ENCODE measurements at regions of chr9 and their contacts with region 1.

Region 1: GRCh38 chr9:32579706-32580331 is 6.9 kb upstream of the NDUFB6 start:
- DNase-seq: no peak
- ATAC-seq: peak; percentile 73
- H3K4me3 ChIP-seq: no peak overlapping the region
- H3K27ac ChIP-seq: no peak overlapping the region
- H3K4me1 ChIP-seq: peaks cover 4% of the 10 kb centered on the region; the same call in 1 of the 2 replicates
- H3K27me3 ChIP-seq: no peaks in the 10 kb centered on the region
- CTCF ChIP-seq: peak; percentile 85 to 93 (median 91)
- EP300 ChIP-seq: no peak
- POLR2A ChIP-seq: no peak
- RAD21 ChIP-seq: peak; percentile 83

Region 2: DNA sequence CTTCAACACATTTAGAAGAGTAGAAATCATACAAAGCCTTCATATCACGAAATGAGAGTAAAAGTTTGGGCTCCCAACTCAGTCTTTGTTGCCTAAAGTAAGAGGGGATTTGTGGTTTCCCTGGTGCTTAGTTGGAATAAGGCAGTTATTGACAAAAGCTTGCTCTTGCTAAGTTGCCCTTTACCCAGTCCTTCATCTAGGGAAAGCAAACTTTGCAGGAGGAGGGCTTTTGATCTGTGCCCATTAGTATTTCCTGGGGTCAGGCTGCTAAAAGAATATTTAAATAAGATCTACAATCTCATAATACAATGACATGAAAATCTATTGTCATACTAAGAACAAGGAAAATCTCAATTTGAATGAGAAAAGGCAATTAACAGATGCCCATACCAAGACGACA is 279.4 kb before region 1 on chr9:
- CTCF ChIA-PET with region 1: no interaction called
- POLR2A ChIA-PET with region 1: no interaction called
- RAD21 ChIA-PET with region 1: no interaction called
- SMC1A ChIA-PET with region 1: no interaction called
- in situ Hi-C with region 1: no loop called
- intact Hi-C with region 1: no loop called
- DNase-seq: no peak
- ATAC-seq: no peak
- H3K4me3 ChIP-seq: no peak overlapping the region
- H3K27ac ChIP-seq: no peak overlapping the region
- H3K4me1 ChIP-seq: no peaks in the 10 kb centered on the region
- H3K27me3 ChIP-seq: no peaks in the 10 kb centered on the region
- CTCF ChIP-seq: no peak
- EP300 ChIP-seq: no peak
- POLR2A ChIP-seq: no peak
- RAD21 ChIP-seq: no peak

Region 3: GRCh38 chr9:32384364-32385151 is 195.3 kb before region 1 on chr9 and contains the start of gene ACO1:
- CTCF ChIA-PET with region 1: interaction called, 597 read pairs
- POLR2A ChIA-PET with region 1: interaction called, 7 read pairs
- RAD21 ChIA-PET with region 1: interaction called, 368 read pairs
- SMC1A ChIA-PET with region 1: interaction called, 285 read pairs
- in situ Hi-C with region 1: loop called (anchors 5 kb)
- intact Hi-C with region 1: loop called (anchors 1 kb)
- DNase-seq: peak; percentile 28
- ATAC-seq: peak; percentile 99
- H3K4me3 ChIP-seq: peak within 1 kb of the TSS; percentile 69
- H3K27ac ChIP-seq: no peak within 1 kb of the TSS
- H3K4me1 ChIP-seq: 0 out of 2 replicates have a peak, but pooled peaks cover 3% of the 10 kb centered on the region
- H3K27me3 ChIP-seq: no peaks in the 10 kb centered on the region; a peak in 2 of 4 replicates
- CTCF ChIP-seq: peak in 1 of 3 experiments; percentile 24; a peak in 1 of 6 replicates
- EP300 ChIP-seq: no peak
- POLR2A ChIP-seq: peak; percentile 82
- RAD21 ChIP-seq: no peak
- polyA plus RNA-seq, gene ACO1: 0.21 to 0.53 TPM

Region 4: GRCh38 chr9:32431940-32432555 is 147.8 kb before region 1 on chr9:
- CTCF ChIA-PET with region 1: interaction called, 21 read pairs
- POLR2A ChIA-PET with region 1: no interaction called
- RAD21 ChIA-PET with region 1: interaction called, 4 read pairs
- SMC1A ChIA-PET with region 1: interaction called, 3 read pairs
- in situ Hi-C with region 1: no loop called
- intact Hi-C with region 1: no loop called
- DNase-seq: no peak
- ATAC-seq: peak; percentile 72
- H3K4me3 ChIP-seq: no peak overlapping the region
- H3K27ac ChIP-seq: no peak overlapping the region
- H3K4me1 ChIP-seq: no peaks in the 10 kb centered on the region
- H3K27me3 ChIP-seq: no peaks in the 10 kb centered on the region
- CTCF ChIP-seq: peak; percentile 33 to 46 (median 39); a peak in 5 of 6 replicates
- EP300 ChIP-seq: no peak
- POLR2A ChIP-seq: no peak
- RAD21 ChIP-seq: peak; percentile 29; the same call in 1 of the 2 replicates

Region 5: GRCh38 chr9:32550562-32551433 is 29.0 kb before region 1 on chr9:
- CTCF ChIA-PET with region 1: interaction called, 48 read pairs
- POLR2A ChIA-PET with region 1: interaction called, 4 read pairs
- RAD21 ChIA-PET with region 1: interaction called, 51 read pairs
- SMC1A ChIA-PET with region 1: interaction called, 10 read pairs
- in situ Hi-C with region 1: no loop called
- intact Hi-C with region 1: no loop called
- DNase-seq: peak; percentile 64
- ATAC-seq: peak; percentile 79
- H3K4me3 ChIP-seq: peak overlapping the region; percentile 83
- H3K27ac ChIP-seq: peak overlapping the region; percentile 96
- H3K4me1 ChIP-seq: peaks cover 8% of the 10 kb centered on the region
- H3K27me3 ChIP-seq: no peaks in the 10 kb centered on the region
- CTCF ChIP-seq: 0 out of 6 replicates have a peak, but pooled peaks of 2 of the 3 experiments have one; percentile 16
- EP300 ChIP-seq: no peak
- POLR2A ChIP-seq: peak; percentile 75
- RAD21 ChIP-seq: no peak

Region 6: GRCh38 chr9:32603914-32604741 is 24.3 kb after region 1 on chr9:
- CTCF ChIA-PET with region 1: interaction called, 14 read pairs
- POLR2A ChIA-PET with region 1: no interaction called
- RAD21 ChIA-PET with region 1: interaction called, 5 read pairs
- SMC1A ChIA-PET with region 1: interaction called, 4 read pairs
- in situ Hi-C with region 1: no loop called
- intact Hi-C with region 1: no loop called
- DNase-seq: no peak
- ATAC-seq: peak; percentile 79
- H3K4me3 ChIP-seq: no peak overlapping the region
- H3K27ac ChIP-seq: no peak overlapping the region
- H3K4me1 ChIP-seq: peaks cover 3% of the 10 kb centered on the region
- H3K27me3 ChIP-seq: no peaks in the 10 kb centered on the region; a peak in 1 of 4 replicates
- CTCF ChIP-seq: no peak
- EP300 ChIP-seq: no peak
- POLR2A ChIP-seq: no peak
- RAD21 ChIP-seq: no peak

Region 7: DNA sequence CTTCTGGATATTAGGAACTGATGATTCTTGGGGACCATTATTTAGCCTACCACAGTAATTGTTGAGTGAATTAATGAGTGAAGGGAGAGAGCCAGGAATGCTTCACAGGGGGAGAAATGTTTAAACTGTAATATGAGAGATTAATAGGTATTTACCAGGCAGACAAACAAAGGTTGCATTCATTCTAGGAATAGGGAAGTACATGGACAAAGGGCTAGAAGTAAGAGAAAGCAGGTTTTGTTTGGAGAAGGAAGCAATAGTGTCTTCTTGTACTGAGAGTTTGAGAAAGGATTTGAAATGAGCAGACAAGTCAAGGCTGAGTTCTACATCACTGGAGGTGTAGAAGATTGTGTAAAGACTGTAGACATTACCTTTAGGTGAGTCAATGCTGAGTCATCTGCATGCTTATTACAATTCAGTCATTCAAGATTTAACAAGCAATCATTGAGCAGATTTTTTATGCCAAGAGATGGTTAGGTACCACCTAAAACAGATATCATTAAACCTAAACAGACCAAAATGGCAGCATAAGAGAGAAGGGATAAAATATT is 47.6 kb after region 1 on chr9:
- CTCF ChIA-PET with region 1: no interaction called
- POLR2A ChIA-PET with region 1: no interaction called
- RAD21 ChIA-PET with region 1: no interaction called
- SMC1A ChIA-PET with region 1: no interaction called
- in situ Hi-C with region 1: no loop called
- intact Hi-C with region 1: no loop called
- DNase-seq: no peak
- ATAC-seq: no peak
- H3K4me3 ChIP-seq: no peak overlapping the region
- H3K27ac ChIP-seq: no peak overlapping the region
- H3K4me1 ChIP-seq: no peaks in the 10 kb centered on the region
- H3K27me3 ChIP-seq: no peaks in the 10 kb centered on the region
- CTCF ChIP-seq: no peak
- EP300 ChIP-seq: no peak
- POLR2A ChIP-seq: no peak
- RAD21 ChIP-seq: no peak